T-cell (primary cell): ENCODE measurements at regions of chr1 and their contacts with region 1.

Region 1: DNA sequence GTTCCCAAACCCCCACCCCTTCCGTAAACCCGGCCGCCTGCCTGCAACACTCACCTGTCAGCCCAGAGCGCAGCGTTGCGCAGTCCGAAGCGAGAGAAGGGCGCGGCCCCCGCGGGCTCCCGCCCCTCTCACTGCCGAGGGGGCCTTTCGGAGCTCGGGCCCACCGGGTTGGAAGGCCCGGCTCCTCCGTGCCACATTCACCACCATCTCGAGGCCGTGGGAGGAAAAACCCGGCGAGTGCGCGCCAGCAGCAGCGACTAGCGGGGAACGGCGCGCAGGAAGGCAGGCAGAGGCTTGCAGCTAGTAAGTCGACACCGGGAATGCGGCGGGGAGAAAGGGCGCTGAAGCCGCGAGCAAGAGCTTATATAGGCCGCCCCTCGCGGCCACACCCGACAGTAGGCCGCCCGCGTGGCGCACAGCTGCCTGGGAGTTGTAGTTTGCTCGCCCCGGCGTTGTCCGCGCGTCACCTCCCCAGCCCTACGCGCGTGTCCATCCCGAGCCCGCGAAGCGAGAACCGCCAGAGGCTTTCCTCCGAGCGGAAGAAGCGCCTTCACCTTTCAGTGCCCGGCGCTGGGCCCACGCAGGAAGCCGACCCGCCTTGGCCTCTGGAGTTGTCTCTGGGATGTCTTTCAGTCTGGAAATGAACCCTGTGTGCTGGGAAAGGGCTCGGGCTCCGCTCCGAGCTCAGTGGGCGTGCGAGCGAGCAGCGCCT is 10.4 kb upstream of the RAB42 start:
- DNase-seq: peak; percentile 74 to 95 (median 84)
- ATAC-seq: peak; percentile 87 to 92 (median 90)
- H3K4me3 ChIP-seq: peak overlapping the region; percentile 91 to 95
- H3K4me3 Mint-ChIP-seq: peak overlapping the region; percentile 89 to 97 (median 92)
- H3K27ac ChIP-seq: peak overlapping the region; percentile 70
- H3K27ac Mint-ChIP-seq: peak overlapping the region; percentile 92 to 93
- H3K4me1 ChIP-seq: peaks cover 11 to 39% of the 10 kb centered on the region in 2 experiments
- H3K4me1 Mint-ChIP-seq: peaks cover 36 to 52% (median 38%) of the 10 kb centered on the region in 3 donors
- H3K27me3 ChIP-seq: no peaks in the 10 kb centered on the region
- H3K27me3 Mint-ChIP-seq: no peaks in the 10 kb centered on the region

Region 2: DNA sequence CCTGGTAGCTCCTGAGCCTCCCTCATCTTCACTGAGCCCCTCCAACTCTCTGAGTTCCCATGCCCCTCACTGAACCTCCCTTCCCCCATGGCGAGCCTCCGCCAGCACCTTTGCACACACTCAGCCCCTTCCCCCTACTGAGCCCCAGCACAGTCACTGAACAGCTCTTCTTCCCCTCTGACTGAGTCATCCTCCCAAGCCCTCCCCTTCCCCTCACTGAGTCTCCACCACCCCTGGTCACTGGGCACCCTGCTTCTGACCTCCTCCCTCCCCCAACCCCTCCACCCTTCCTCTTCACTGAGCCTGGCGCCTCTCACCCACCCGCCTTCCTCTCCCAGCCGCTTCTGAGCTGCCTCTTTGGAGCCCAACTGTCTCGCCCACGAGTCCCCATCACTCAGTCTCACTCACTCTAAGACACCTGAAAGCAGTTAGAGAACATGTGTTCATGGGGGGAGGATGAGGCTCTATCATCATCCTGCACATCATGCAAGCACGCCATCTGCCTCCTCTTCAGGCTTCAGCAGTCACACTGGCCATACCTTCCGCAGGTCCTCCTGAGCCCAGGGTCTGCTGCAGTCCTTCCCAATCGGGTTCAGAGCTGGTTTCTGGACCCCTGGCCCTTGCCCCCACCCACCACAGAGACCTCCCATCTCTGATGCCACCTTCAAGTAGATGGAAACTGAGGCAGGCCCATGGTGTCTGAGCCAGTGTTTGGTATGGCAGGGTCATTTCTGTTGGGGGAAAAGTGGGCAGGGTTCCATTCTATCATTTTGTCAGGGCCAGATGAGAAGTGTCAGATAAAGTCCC is 1590.2 kb before region 1 on chr1:
- CTCF ChIA-PET with region 1: no interaction called
- POLR2A ChIA-PET with region 1: interaction called in 1 of 2 experiments, 15 read pairs
- DNase-seq: peak in 2 of 35 experiments; percentile 18 to 37
- ATAC-seq: peak in 1 of 4 experiments; percentile 29
- H3K4me3 ChIP-seq: no peak overlapping the region
- H3K4me3 Mint-ChIP-seq: peak overlapping the region in 1 of 3 donors; percentile 17
- H3K27ac ChIP-seq: no peak overlapping the region
- H3K27ac Mint-ChIP-seq: no peak overlapping the region
- H3K4me1 ChIP-seq: peaks cover 0 to 16% of the 10 kb centered on the region in 2 experiments
- H3K4me1 Mint-ChIP-seq: peaks cover 6 to 17% (median 16%) of the 10 kb centered on the region in 3 donors
- H3K27me3 ChIP-seq: peaks cover 18 to 61% of the 10 kb centered on the region in 2 experiments
- H3K27me3 Mint-ChIP-seq: peaks cover 39 to 53% of the 10 kb centered on the region in 2 donors

Region 3: DNA sequence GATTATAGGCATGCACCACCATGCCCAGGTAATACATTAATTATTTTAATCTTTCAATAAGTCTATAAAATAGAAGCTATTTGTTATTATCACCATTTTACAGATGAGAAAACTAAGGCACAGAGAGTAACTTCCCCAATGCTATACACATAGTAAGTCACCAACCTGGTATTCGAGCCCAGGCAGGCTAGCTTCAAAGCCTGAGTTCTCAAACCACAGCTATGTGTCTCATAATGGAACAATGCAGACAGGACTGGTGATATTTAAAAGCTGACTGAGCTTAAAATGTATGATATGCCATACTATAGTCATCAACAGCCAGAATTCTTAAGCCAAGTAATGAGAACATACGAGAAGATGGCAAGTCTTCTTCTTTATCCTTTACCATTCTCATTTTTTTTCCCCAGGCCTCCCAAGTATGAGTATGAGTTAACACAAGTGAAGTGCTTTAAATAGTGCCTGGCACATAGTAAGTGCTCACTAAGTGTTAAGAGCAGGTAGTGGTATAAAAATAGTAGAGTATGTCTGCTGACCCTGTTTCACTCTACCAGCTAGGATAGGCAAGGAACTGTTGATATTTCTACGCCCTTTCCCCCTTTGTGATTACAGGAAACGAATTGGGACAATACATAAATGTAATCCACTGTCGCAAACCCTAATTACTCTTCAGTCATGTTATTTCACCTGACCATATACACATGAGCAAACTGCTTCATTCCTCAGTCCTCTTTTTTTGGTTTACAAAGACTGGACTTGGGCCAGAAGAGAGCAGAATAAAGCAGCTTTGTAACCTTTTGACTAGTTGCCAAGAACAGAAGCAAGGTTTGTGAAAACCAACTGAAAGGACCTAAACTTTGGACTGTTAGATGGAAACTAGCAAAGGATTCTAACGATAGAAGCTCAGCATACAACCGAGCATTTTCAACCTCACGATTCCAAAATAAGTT is 502.7 kb before region 1 on chr1:
- CTCF ChIA-PET with region 1: no interaction called
- POLR2A ChIA-PET with region 1: interaction called in 1 of 2 experiments, 10 read pairs
- DNase-seq: no peak
- ATAC-seq: no peak
- H3K4me3 ChIP-seq: no peak overlapping the region
- H3K4me3 Mint-ChIP-seq: no peak overlapping the region
- H3K27ac ChIP-seq: no peak overlapping the region
- H3K27ac Mint-ChIP-seq: no peak overlapping the region
- H3K4me1 ChIP-seq: no peaks in the 10 kb centered on the region
- H3K4me1 Mint-ChIP-seq: peaks cover 12 to 28% (median 27%) of the 10 kb centered on the region in 3 donors
- H3K27me3 ChIP-seq: no peaks in the 10 kb centered on the region
- H3K27me3 Mint-ChIP-seq: no peaks in the 10 kb centered on the region

Region 4: DNA sequence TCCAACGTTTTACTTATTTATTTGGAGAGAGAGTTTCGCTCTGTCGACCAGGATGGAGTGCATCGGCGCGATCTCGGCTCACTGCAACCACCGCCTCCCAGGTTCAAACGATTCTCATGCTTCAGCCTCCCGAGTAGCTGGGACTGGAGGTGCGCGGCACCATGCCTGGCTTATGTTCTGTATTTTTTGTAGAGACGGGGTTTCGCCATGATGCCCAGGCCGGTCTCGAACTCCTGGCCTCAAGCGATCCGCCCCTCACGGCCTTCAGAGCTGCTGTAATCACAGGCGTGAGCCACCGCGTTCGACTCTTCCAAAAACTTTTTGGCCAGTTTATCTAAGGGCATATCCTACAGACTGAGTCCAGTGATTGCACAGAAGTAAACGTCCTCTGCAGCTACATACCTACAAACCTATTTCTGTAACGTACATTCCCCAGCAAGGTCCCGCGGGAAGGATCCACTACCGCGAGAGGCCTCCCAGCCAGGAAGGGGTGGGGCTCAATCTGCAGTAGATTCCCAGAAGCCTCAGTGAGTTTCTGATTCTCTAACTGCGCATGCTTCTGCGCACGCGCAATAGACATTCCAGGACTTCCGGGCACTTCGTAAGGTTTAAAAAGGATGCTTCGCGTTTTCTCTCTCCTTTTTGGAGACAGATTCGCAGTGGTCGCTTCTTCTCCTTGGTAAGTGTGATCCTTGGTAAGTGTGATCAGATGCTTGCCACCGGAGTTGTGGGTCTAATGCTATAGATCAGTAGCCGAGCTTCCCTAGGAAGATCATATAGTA is 76.1 kb before region 1 on chr1 and contains the start of gene RCC1:
- CTCF ChIA-PET with region 1: interaction called, 3 to 5 read pairs
- POLR2A ChIA-PET with region 1: interaction called, 9 to 21 read pairs
- DNase-seq: peak; percentile 83 to 99 (median 95)
- ATAC-seq: peak; percentile 89 to 92 (median 91)
- H3K4me3 ChIP-seq: peak within 1 kb of the TSS; percentile 78 to 93
- H3K4me3 Mint-ChIP-seq: peak within 1 kb of the TSS; percentile 94 to 100 (median 99)
- H3K27ac ChIP-seq: peak within 1 kb of the TSS; percentile 77
- H3K27ac Mint-ChIP-seq: peak within 1 kb of the TSS; percentile 96 to 99
- H3K4me1 ChIP-seq: peaks cover 29 to 47% of the 10 kb centered on the region in 2 experiments
- H3K4me1 Mint-ChIP-seq: peaks cover 36 to 53% (median 45%) of the 10 kb centered on the region in 3 donors
- H3K27me3 ChIP-seq: no peaks in the 10 kb centered on the region
- H3K27me3 Mint-ChIP-seq: no peaks in the 10 kb centered on the region
- total RNA-seq, gene RCC1: 13.1 to 23.2 (median 19.7) TPM

Region 5: DNA sequence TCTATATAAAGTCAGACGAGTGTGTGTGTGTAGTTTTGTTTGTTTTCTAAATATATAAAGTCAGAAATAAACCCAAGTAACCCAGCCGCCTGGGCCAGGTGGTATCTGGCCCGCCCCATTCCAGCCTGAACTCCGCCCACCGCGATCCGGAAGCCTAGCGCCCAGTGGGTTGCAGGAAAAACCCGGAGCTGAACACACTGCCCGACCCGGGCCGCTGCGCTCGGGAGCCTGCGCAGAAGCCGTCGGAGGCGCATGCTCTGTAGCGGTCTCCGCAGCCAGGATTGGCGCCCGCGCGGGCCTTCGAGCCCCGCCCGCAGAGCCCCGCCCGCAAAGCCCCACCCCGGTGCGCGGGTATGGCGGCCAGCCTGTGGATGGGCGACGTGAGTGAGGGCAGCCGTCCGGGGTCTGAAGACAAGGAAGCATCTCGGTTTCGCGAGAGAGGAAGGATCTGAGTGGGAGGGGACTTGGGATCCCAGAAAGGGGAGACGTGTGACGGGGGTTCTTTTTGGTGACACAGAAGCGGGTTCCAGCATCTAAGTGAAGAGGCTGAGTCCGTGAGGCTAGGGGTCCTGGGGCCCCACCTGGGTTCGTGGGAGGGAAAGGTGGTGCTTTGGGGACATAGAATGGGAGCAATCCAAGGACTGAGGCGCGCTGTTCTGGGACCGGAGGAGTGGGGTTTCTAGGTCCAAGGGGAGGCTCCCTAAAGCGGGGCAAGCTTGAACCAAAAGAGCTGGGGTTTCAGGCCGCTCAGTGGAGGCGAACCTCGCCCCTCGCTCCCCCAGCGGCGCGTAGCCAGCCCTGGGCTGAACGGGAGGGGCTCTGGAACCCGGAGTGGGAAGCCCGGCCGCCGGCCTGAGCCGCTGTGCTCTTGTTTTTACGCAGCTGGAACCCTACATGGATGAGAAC is 28.7 kb before region 1 on chr1 and contains the start of gene TRNAU1AP:
- CTCF ChIA-PET with region 1: interaction called in 1 of 2 experiments, 4 read pairs
- POLR2A ChIA-PET with region 1: interaction called, 7 to 43 read pairs
- DNase-seq: peak; percentile 92 to 98 (median 96)
- ATAC-seq: peak; percentile 93 to 97 (median 95)
- H3K4me3 ChIP-seq: peak within 1 kb of the TSS; percentile 88 to 89
- H3K4me3 Mint-ChIP-seq: peak within 1 kb of the TSS; percentile 91 to 99 (median 98)
- H3K27ac ChIP-seq: peak within 1 kb of the TSS; percentile 77
- H3K27ac Mint-ChIP-seq: peak within 1 kb of the TSS; percentile 95 to 97
- H3K4me1 ChIP-seq: peaks cover 2 to 20% of the 10 kb centered on the region in 2 experiments
- H3K4me1 Mint-ChIP-seq: peaks cover 22 to 27% (median 26%) of the 10 kb centered on the region in 3 donors
- H3K27me3 ChIP-seq: no peaks in the 10 kb centered on the region
- H3K27me3 Mint-ChIP-seq: no peaks in the 10 kb centered on the region
- total RNA-seq, gene TRNAU1AP: 28.6 to 47.6 (median 41.3) TPM